ENCODE measurements at regions of chr11 and their contacts with region 1.

Region 1: DNA sequence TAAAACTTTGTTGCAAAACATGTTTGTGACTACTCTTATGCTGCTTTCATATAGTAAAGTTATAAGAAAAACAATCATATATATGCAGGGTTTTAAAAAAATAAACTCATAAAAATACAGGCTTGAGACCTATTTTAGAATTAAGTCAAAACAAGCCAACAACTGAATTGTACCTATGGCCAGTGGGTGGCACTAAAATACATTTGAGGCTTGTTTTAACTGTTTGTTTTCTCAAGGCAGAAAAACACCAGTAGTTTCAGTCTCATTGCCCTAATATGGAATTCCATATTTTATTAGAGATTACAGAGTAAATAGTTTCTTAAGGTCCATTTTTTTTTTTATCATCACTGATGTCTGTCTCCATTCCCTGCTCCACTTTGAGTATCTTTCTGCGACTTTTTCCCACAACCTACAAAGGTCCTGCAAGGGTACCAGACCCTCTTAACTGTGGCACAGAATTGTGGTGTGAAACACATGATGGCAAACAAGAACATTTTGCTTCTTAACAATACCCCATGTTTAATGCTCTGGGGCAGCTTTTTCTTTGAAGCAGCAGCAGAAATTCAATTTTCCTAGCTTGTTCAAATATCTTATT is 8.5 kb upstream of the CCDC89 start:
- DNase-seq: peak in 1 of 7 donors; percentile 15
- H3K4me3 ChIP-seq: no peak overlapping the region
- H3K27ac ChIP-seq: no peak overlapping the region
- H3K4me1 ChIP-seq: no peaks in the 10 kb centered on the region
- H3K27me3 ChIP-seq: no peaks in the 10 kb centered on the region
- CTCF ChIP-seq: peak; percentile 18 to 59 (median 44)
- POLR2A ChIP-seq: no peak

Region 2: DNA sequence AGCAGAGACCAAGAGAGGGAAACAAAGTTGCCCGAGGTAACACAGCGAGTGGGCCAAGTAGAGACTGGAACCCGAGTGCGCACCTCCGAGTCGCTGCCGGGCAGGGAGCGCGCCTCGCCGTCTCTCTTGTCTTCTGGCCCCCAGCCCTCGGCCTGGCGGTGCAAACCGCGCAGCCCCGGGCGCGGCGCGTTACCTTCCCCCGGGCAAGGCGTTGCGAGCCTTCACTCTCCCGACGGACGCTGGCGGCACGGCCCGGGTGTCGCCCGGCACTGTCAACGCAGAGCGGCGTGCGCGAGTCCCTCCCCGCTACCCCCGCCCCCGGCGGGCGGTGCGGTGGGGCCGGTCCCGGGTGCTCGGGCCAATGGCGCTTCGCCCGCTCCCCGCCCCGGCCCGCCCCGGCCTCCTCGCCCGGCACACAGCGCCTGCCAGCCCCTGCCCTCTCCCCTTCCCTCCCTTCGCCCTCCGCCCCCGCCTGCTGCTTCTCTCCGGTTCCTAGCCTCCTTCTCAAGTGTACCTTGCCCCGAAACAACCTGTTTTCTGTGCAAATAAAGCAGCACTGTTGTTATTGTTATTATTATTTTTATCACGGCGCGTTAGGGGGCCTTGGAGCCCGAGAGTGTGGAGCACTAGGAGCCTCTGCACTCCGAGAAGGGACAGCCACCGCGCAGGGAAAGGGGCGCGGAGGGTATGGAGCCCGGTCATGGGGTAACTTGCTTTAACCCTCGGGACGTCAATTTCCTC is 116.6 kb after region 1 on chr11 and contains the start of gene SYTL2:
- intact Hi-C with region 1: loop called in 1 of 2 experiments (anchors 10 kb)
- DNase-seq: peak; percentile 63 to 84 (median 67)
- H3K4me3 ChIP-seq: peak within 1 kb of the TSS in 2 of 4 donors; percentile 35 to 72
- H3K27ac ChIP-seq: peak within 1 kb of the TSS in 1 of 5 donors; percentile 57
- H3K4me1 ChIP-seq: peaks cover 10 to 11% of the 10 kb centered on the region in 2 donors
- H3K27me3 ChIP-seq: no peaks in the 10 kb centered on the region
- CTCF ChIP-seq: peak in 1 of 6 experiments; percentile 9
- POLR2A ChIP-seq: peak in 1 of 2 donors; percentile 76
- total RNA-seq, gene SYTL2: 9.2 to 134 (median 20.9) TPM